Gastrocnemius medialis (tissue), 4 donors: ENCODE measurements at regions of chr17 and their contacts with region 1.

Region 1: DNA sequence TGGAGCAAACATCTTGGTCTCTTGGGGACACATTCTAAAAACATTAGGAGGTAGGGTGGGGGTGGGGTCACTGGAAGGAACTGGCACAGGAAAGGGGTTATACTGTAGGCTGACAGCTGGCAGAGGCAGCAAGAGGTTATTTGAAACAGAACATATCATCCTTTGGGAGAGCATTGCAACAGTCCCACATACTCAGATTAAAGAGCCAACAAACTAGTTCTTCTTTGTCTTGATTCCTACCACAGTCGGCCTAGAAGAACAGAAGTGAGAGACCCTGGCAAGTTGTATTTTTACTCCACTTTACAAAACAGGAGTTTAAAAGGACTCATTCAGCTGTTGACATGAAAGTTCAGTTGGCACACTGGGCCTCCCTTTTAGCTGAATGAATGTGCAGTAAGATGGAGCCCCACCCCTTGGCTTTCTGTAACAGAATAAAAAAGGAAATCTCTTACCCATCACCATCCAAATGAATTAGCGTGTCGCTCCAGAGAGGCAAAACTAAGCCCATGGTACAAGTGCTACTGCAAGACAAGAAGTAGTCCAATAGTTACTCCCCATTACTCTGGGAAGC is 54.6 kb upstream of the CORO6 start:
- DNase-seq: peak; percentile 89 to 94
- ATAC-seq: peak; percentile 89 to 91
- H3K4me3 ChIP-seq: peak overlapping the region; percentile 14 to 67 (median 49)
- H3K27ac ChIP-seq: peak overlapping the region; percentile 97 to 100 (median 98)
- H3K4me1 ChIP-seq: peaks cover 56 to 60% of the 10 kb centered on the region in 2 donors
- H3K27me3 ChIP-seq: no peaks in the 10 kb centered on the region
- CTCF ChIP-seq: no peak
- POLR2A ChIP-seq: peak; percentile 18 to 41

Region 2: GRCh38 chr17:29760761-29761696 is 83.7 kb after region 1 on chr17:
- in situ Hi-C with region 1: no loop called
- intact Hi-C with region 1: loop called (anchors 5 kb)
- DNase-seq: peak; percentile 84 to 91
- ATAC-seq: peak; percentile 77 to 80
- H3K4me3 ChIP-seq: peak overlapping the region; percentile 68 to 88 (median 78)
- H3K27ac ChIP-seq: peak overlapping the region; percentile 90 to 97 (median 93)
- H3K4me1 ChIP-seq: peaks cover 33 to 52% of the 10 kb centered on the region in 2 donors
- H3K27me3 ChIP-seq: no peaks in the 10 kb centered on the region
- CTCF ChIP-seq: peak in 1 of 5 experiments; percentile 6
- POLR2A ChIP-seq: peak; percentile 92 to 96